T-cell (primary cell): ENCODE measurements at regions of chr6 and their contacts with region 1.

Region 1: GRCh38 chr6:148649454-148649963 is 97.3 kb upstream of the UST start:
- DNase-seq: no peak
- ATAC-seq: no peak
- H3K4me3 ChIP-seq: no peak overlapping the region
- H3K4me3 Mint-ChIP-seq: no peak overlapping the region
- H3K27ac ChIP-seq: no peak overlapping the region
- H3K27ac Mint-ChIP-seq: no peak overlapping the region
- H3K4me1 ChIP-seq: no peaks in the 10 kb centered on the region
- H3K4me1 Mint-ChIP-seq: no peaks in the 10 kb centered on the region
- H3K27me3 ChIP-seq: peaks cover 0 to 9% of the 10 kb centered on the region in 2 experiments
- H3K27me3 Mint-ChIP-seq: peaks cover 8 to 19% of the 10 kb centered on the region in 2 donors

Region 2: GRCh38 chr6:148514091-148514845 is 135.2 kb before region 1 on chr6:
- CTCF ChIA-PET with region 1: interaction called in 1 of 2 experiments, 11 read pairs
- POLR2A ChIA-PET with region 1: no interaction called
- DNase-seq: no peak
- ATAC-seq: no peak
- H3K4me3 ChIP-seq: no peak overlapping the region
- H3K4me3 Mint-ChIP-seq: no peak overlapping the region
- H3K27ac ChIP-seq: no peak overlapping the region
- H3K27ac Mint-ChIP-seq: no peak overlapping the region
- H3K4me1 ChIP-seq: no peaks in the 10 kb centered on the region
- H3K4me1 Mint-ChIP-seq: no peaks in the 10 kb centered on the region
- H3K27me3 ChIP-seq: peaks cover 0 to 17% of the 10 kb centered on the region in 2 experiments
- H3K27me3 Mint-ChIP-seq: peaks cover 16 to 25% of the 10 kb centered on the region in 2 donors

Region 3: GRCh38 chr6:148720406-148720805 is 70.9 kb after region 1 on chr6:
- CTCF ChIA-PET with region 1: no interaction called
- POLR2A ChIA-PET with region 1: no interaction called
- DNase-seq: no peak
- ATAC-seq: no peak
- H3K4me3 ChIP-seq: no peak overlapping the region
- H3K4me3 Mint-ChIP-seq: no peak overlapping the region
- H3K27ac ChIP-seq: no peak overlapping the region
- H3K27ac Mint-ChIP-seq: no peak overlapping the region
- H3K4me1 ChIP-seq: no peaks in the 10 kb centered on the region
- H3K4me1 Mint-ChIP-seq: no peaks in the 10 kb centered on the region
- H3K27me3 ChIP-seq: no peaks in the 10 kb centered on the region
- H3K27me3 Mint-ChIP-seq: peaks cover 22 to 24% of the 10 kb centered on the region in 2 donors